ENCODE measurements at regions of chr2 and their contacts with region 1.

Region 1: GRCh38 chr2:70199326-70199864 is 8.6 kb upstream of the C2orf42 start:
- DNase-seq: no peak
- ATAC-seq: no peak
- H3K4me3 ChIP-seq: no peak overlapping the region
- H3K27ac ChIP-seq: no peak overlapping the region
- H3K4me1 ChIP-seq: no peaks in the 10 kb centered on the region
- H3K27me3 ChIP-seq: no peaks in the 10 kb centered on the region
- CTCF ChIP-seq: no peak
- POLR2A ChIP-seq: no peak
- RAD21 ChIP-seq: no peak

Region 2: DNA sequence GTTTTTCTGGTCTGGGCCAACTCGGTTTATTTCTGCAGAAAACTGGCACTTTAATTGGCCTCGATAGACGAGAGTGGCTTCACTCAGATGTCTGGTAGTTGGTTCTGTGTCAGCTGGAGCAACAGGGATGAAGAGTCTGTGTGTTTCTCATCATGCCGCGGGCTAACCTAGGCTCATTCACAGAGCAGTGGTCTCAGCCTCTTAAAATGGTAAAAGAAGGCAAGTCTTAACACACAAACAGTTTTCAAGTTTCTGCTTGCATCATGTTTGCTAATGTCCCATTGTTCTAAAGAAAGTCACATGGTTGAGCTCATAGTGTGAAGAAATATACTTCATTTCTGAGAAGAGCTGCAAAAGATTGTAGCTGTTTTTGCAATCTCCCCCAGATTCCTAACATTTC is 494.9 kb before region 1 on chr2:
- CTCF ChIA-PET with region 1: no interaction called
- POLR2A ChIA-PET with region 1: no interaction called
- dilution Hi-C with region 1: no loop called
- in situ Hi-C with region 1: no loop called
- intact Hi-C with region 1: no loop called
- DNase-seq: no peak
- ATAC-seq: no peak
- H3K4me3 ChIP-seq: no peak overlapping the region
- H3K27ac ChIP-seq: no peak overlapping the region
- H3K4me1 ChIP-seq: no peaks in the 10 kb centered on the region
- H3K27me3 ChIP-seq: no peaks in the 10 kb centered on the region
- CTCF ChIP-seq: no peak
- POLR2A ChIP-seq: no peak
- RAD21 ChIP-seq: no peak

Region 3: DNA sequence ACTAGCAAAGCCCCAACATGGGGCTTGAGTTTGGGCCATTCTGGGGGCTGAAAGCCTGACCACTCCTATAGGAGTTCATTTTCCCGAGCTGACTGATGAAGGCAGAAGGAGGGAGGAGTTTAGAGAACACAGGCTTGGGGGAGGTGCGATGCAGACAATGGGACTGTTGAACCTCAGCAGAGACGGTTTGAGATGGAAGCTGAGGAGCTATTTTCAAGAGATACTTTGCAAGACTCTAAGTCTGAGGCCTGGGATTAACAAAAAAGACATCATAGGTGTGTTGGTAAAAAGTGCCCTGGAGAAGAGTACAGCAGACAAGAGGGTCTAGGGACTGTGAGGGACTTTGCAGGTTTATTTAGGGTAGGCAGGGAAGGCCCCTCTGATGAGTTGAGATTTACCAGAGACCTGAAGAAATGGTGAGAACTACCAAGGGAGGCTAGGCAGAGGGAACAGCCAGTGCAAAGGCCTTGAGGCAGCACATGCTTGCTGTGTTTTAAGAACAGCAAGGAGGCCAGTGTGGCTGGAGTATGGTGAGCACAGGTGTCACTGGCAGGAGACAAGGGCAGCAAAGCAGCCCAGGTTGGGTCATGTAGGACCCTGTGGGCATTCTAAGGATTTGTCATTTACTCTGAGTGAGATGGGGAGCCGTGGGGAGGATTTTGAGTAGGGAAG is 80.5 kb before region 1 on chr2:
- CTCF ChIA-PET with region 1: no interaction called
- POLR2A ChIA-PET with region 1: no interaction called
- dilution Hi-C with region 1: no loop called
- in situ Hi-C with region 1: no loop called
- intact Hi-C with region 1: no loop called
- DNase-seq: no peak
- ATAC-seq: no peak
- H3K4me3 ChIP-seq: no peak overlapping the region
- H3K27ac ChIP-seq: no peak overlapping the region
- H3K4me1 ChIP-seq: peaks cover 7% of the 10 kb centered on the region
- H3K27me3 ChIP-seq: no peaks in the 10 kb centered on the region
- CTCF ChIP-seq: no peak
- POLR2A ChIP-seq: no peak
- RAD21 ChIP-seq: no peak

Region 4: DNA sequence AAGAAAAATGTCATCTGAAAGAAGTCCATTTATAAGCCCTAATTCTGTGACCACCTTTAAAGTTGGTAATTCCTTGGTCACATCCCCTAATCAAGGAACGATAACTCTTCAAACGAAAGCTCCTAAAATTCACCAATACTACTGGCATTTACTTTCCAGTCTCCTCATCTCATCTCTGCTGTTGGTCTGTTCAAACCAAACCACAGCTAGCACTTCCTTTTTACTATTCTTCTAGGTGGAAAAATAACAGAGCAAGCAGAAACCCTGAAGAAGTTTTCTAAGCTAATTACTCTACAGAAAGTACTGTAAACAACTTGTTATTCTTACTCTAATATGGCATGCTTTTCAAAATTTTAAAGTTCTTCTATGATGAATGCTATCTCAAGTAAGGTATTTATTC is 27.4 kb after region 1 on chr2:
- CTCF ChIA-PET with region 1: no interaction called
- POLR2A ChIA-PET with region 1: no interaction called
- dilution Hi-C with region 1: no loop called
- in situ Hi-C with region 1: no loop called
- intact Hi-C with region 1: no loop called
- DNase-seq: no peak
- ATAC-seq: no peak
- H3K4me3 ChIP-seq: no peak overlapping the region
- H3K27ac ChIP-seq: no peak overlapping the region
- H3K4me1 ChIP-seq: no peaks in the 10 kb centered on the region
- H3K27me3 ChIP-seq: no peaks in the 10 kb centered on the region
- CTCF ChIP-seq: no peak
- POLR2A ChIP-seq: no peak
- RAD21 ChIP-seq: no peak

Region 5: DNA sequence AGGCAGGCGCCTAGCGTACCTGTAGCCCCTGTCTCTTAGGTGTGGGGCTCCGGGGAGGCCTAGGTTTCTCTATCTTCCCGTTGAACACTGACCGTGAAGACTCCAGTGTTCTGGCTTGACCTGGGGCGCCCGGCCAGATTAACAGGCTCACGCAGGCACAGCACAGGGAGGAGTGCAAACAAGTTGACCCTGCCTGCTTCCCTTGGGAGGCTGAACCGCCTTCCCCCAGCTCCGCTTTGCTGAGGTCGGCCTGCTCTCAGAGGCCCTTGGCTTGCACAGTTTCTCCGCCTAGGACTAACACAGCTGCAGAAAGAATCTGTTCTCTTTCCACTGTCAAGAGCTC is 59.1 kb after region 1 on chr2:
- CTCF ChIA-PET with region 1: no interaction called
- POLR2A ChIA-PET with region 1: interaction called, 10 read pairs
- dilution Hi-C with region 1: no loop called
- in situ Hi-C with region 1: no loop called
- intact Hi-C with region 1: no loop called
- DNase-seq: peak; percentile 17
- ATAC-seq: peak; percentile 22
- H3K4me3 ChIP-seq: peak overlapping the region; percentile 99
- H3K27ac ChIP-seq: peak overlapping the region; percentile 69
- H3K4me1 ChIP-seq: peaks cover 16% of the 10 kb centered on the region
- H3K27me3 ChIP-seq: no peaks in the 10 kb centered on the region
- CTCF ChIP-seq: no peak
- POLR2A ChIP-seq: no peak
- RAD21 ChIP-seq: no peak

Measured in IMR-90 (cell line).